ENCODE measurements at regions of chr3 and their contacts with region 1.

Region 1: DNA sequence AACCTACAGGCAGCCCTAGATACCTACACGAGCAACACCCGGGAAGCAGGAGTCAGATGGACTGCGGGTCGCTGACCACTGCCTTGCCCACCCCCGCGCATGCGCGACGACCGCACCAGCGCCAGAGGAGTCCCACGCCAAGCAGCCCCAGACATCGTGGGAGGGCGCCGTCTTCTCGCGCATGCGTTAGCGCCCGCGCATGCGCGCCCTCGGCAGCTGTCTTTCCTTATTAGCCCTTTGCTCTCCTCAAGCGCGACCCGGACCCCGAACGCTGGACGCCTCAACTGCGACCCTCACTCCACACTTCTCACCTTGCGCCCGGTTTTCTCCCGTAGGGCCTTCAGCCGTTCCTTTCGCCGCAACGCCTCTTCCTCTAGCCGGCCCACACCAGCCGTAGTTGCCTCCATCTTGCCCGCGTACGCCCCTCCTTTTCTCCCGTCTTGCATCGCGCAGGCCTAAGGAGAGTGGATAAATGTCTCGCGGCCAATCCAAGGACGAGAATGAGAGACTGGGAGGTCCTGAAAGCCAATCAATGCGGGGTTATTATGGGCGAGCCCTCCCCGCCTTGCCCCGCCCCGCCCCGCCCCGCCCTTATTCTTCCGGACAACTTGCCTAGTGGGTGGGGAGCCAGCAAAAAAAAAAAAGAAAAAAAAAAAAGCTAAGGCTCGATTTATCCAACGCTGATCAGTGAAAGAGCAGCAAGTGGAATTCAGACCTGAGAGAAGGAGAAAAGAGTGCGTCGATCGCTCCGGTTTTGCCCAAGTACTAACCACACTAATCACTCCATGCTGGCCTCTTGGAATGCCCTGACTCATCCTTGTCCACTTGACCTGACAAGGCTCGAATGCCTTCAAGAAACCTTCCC is at the start of gene CCDC12:
- DNase-seq: peak; percentile 99
- H3K4me3 ChIP-seq: peak within 1 kb of the TSS; percentile 52 to 86 (median 79)
- H3K27ac ChIP-seq: peak within 1 kb of the TSS; percentile 82
- H3K4me1 ChIP-seq: peaks cover 39% of the 10 kb centered on the region
- H3K27me3 ChIP-seq: no peaks in the 10 kb centered on the region
- CTCF ChIP-seq: no peak
- POLR2A ChIP-seq: peak; percentile 92
- total RNA-seq, gene CCDC12: 45.0 and 50.5 TPM in 2 replicates

Region 2: DNA sequence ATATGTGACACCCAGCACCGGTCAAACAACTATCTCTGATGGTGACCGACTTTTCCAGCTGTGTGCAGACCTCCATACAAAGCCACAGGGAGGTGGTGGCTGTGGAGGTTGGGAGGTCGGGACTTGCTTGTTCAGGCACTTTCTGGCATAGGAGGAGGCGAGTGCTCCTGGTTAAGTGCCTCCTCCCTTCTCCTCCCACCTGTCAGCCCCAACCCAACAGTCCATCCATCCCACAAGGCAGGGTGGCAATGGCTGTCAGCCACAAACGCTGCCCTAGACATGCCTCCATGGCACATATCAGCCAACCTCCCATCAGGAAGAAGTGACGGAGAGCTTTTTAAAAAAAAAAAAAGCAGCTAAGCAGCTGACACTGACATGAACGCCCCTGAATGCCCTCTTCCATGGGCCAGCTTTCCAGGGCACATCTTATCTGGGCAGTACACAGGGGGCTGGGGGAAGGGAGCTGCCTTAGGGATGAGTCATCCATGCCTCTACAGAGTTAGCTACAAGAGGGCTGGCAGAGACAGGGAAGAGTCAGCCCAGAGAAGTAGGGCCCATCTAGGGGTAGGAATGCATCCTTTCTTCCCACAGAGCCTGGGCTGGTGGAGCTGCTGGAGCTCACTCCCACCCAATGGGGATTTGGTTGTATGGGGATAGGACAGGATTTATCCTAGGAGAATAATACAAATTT is 41.2 kb before region 1 on chr3:
- CTCF ChIA-PET with region 1: interaction called, 7 read pairs
- POLR2A ChIA-PET with region 1: interaction called, 11 read pairs
- dilution Hi-C with region 1: no loop called
- intact Hi-C with region 1: loop called (anchors 1 kb)
- DNase-seq: peak; percentile 98
- H3K4me3 ChIP-seq: no peak overlapping the region
- H3K27ac ChIP-seq: peak overlapping the region; percentile 87
- H3K4me1 ChIP-seq: peaks cover 62% of the 10 kb centered on the region
- H3K27me3 ChIP-seq: no peaks in the 10 kb centered on the region
- CTCF ChIP-seq: peak; percentile 50 to 72
- POLR2A ChIP-seq: peak; percentile 60

Region 3: GRCh38 chr3:46947981-46948791 is 28.4 kb before region 1 on chr3:
- CTCF ChIA-PET with region 1: interaction called, 3 read pairs
- POLR2A ChIA-PET with region 1: interaction called, 8 read pairs
- dilution Hi-C with region 1: no loop called
- intact Hi-C with region 1: loop called (anchors 1 kb)
- DNase-seq: peak; percentile 58
- H3K4me3 ChIP-seq: no peak overlapping the region
- H3K27ac ChIP-seq: peak overlapping the region; percentile 39
- H3K4me1 ChIP-seq: peaks cover 70% of the 10 kb centered on the region
- H3K27me3 ChIP-seq: no peaks in the 10 kb centered on the region
- CTCF ChIP-seq: no peak
- POLR2A ChIP-seq: no peak

Region 4: GRCh38 chr3:46960081-46960701 is 16.4 kb before region 1 on chr3:
- CTCF ChIA-PET with region 1: interaction called, 9 read pairs
- POLR2A ChIA-PET with region 1: interaction called, 10 read pairs
- dilution Hi-C with region 1: no loop called
- intact Hi-C with region 1: loop called (anchors 1 kb)
- DNase-seq: peak; percentile 92
- H3K4me3 ChIP-seq: peak overlapping the region in 2 of 3 experiments; percentile 0 to 40
- H3K27ac ChIP-seq: peak overlapping the region; percentile 82
- H3K4me1 ChIP-seq: peaks cover 33% of the 10 kb centered on the region
- H3K27me3 ChIP-seq: no peaks in the 10 kb centered on the region
- CTCF ChIP-seq: no peak
- POLR2A ChIP-seq: no peak

Region 5: DNA sequence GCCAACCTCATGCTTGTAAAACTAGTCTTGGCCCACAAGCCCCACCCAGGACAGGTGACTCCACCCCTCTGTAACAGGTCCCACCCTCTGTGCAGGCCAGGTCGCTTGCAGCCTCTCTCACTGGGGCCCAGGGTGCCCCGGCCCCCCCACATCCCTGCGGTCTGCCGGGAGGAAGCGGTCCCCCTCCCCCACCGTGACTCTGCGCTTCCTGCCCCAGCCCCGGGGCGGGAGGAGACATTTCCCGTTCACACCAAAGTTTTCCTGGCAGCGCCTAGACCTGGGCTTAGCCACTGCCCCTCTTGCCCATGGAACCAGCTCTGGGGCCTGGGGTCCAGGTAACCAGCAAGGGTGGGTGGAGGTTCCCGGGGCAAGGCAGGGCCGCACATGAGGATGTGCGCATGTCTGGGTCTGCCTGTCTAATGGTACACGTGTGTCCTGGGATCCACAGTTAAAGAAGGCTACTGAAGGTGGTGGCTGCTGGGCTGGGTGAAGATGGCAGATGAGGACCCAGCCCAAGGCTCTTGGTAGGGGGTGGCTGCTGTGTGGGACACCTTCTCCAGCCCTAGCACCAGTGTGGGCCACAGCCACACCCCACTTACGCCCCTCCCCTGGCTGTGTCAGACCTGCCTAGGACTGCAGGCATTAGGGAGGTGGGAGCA is 11.3 kb after region 1 on chr3:
- CTCF ChIA-PET with region 1: no interaction called
- POLR2A ChIA-PET with region 1: interaction called, 7 read pairs
- dilution Hi-C with region 1: no loop called
- intact Hi-C with region 1: loop called (anchors 1 kb)
- DNase-seq: peak; percentile 65
- H3K4me3 ChIP-seq: no peak overlapping the region
- H3K27ac ChIP-seq: peak overlapping the region; percentile 77
- H3K4me1 ChIP-seq: peaks cover 21% of the 10 kb centered on the region
- H3K27me3 ChIP-seq: no peaks in the 10 kb centered on the region
- CTCF ChIP-seq: no peak
- POLR2A ChIP-seq: no peak

Region 6: DNA sequence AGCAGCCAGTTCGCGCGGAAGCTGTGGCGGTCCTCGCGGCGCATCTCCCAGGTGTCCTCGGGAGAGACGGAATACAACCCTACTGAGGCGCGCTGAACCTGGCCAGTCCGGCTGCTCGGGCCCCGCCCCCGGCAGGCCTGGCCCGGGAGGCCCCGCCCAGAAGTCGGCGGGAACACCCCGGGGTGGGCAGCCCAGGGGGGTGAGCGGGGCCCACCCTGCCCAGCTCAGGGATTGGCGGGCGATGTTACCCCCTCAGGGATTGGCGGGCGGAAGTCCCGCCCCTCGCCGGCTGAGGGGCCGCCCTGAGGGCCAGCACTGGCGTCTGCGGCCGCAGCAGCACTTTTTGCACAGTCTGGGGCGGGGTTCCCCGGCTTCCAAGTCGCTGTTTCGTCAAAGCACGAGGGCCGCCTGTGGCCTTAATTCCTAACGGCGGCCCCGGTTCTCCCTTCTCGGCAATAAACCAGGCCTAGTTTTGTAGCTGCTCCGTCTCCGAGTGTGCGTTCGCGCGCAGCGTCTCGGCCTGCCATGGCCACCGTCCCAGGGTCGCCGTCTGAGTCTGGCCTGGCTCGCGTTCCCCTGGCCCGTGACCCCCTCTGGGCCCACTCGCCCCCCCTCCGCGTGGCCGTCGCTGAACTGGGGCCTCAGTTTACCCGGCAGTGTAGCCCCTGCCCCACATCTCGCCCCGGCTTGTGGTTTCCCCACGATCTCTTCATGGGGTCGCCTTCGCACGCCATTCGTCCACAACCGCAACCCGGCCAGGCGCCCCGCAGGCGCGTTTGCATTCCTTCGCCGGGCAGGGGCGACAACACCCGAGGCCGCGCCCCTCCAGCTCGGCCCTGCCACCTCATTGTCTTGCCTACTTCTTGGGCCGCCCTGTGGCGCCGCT is 32.9 kb after region 1 on chr3:
- CTCF ChIA-PET with region 1: no interaction called
- POLR2A ChIA-PET with region 1: interaction called, 4 read pairs
- dilution Hi-C with region 1: no loop called
- intact Hi-C with region 1: loop called (anchors 2 kb)
- DNase-seq: peak; percentile 91
- H3K4me3 ChIP-seq: peak overlapping the region in 2 of 3 experiments; percentile 53 to 56
- H3K27ac ChIP-seq: peak overlapping the region; percentile 71
- H3K4me1 ChIP-seq: peaks cover 6% of the 10 kb centered on the region
- H3K27me3 ChIP-seq: no peaks in the 10 kb centered on the region
- CTCF ChIP-seq: peak in 1 of 2 donors; percentile 13
- POLR2A ChIP-seq: peak; percentile 95

Region 7: DNA sequence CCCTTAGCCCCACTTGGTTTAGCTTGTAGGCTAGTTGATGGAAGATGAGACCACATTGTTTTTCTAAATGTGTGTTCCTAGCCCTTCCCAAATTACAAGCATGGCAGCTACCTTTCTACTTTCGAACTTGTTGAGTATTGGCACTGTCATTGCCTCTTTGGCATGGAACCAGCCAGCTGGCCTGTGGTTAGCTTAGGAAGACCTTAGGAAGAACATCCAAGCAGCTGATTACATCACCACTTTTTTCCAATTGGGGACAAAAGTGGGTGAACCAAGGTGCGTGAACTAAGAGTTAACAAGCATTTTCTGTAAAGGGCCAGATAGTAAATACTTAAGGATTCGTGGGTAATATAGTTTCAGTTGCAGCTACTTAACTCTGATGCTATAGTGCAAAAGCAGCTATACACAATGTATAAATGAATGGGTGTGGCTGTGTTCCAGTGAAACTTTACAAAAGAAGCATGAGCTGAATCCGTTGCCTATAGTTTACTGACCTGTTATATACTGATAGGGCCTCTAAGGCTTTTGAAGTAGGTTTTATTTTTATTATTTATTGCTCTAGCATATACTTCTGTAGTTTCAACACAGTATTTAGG is 314.7 kb after region 1 on chr3:
- CTCF ChIA-PET with region 1: no interaction called
- POLR2A ChIA-PET with region 1: no interaction called
- dilution Hi-C with region 1: no loop called
- intact Hi-C with region 1: no loop called
- DNase-seq: no peak
- H3K4me3 ChIP-seq: no peak overlapping the region
- H3K27ac ChIP-seq: no peak overlapping the region
- H3K4me1 ChIP-seq: no peaks in the 10 kb centered on the region
- H3K27me3 ChIP-seq: no peaks in the 10 kb centered on the region
- CTCF ChIP-seq: no peak
- POLR2A ChIP-seq: no peak